ENCODE measurements at regions of chr11 and their contacts with region 1.

Region 1: DNA sequence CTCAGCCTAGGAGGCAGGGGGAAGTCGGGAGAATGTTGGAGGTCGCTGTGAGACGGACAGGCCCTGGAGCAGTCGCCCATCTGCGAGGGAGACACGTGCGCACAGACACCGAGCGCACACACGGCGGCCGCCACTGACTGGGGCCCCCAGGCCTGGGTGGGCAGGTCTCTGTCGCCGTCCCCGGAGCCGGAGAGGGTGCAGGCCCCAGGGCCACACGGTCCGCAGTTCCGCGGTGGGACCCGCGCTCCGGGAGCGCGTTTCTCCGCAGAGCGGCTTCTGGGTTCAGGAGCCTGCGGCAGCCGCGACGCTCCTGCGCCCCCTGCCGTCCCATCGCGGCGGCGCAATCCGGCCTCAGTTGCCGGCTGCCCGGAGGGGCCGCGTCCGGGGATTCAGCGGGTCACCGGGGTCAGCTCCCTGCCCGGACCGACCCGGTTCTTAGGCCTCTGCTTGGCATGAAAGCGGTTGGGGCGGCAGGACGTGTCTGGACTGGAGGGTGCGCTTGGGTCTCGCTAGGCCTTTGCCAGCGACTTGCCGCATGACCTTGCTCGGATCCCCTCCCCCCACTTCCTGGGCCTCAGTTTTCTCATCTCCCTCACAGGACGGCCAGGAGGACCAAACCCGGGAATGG is 31.2 kb downstream of the PDE2A start:
- DNase-seq: peak; percentile 19 to 92
- H3K4me3 ChIP-seq: peak overlapping the region; percentile 14 to 59 (median 30); a peak in 5 of 8 replicates
- H3K27ac ChIP-seq: no peak overlapping the region
- H3K4me1 ChIP-seq: peaks cover 0 to 2% (median 0%) of the 10 kb centered on the region in 4 experiments; a peak in 1 of 7 replicates
- H3K27me3 ChIP-seq: peaks cover 16 to 49% (median 37%) of the 10 kb centered on the region in 4 experiments
- CTCF ChIP-seq: peak; percentile 84 to 96 (median 94)
- EP300 ChIP-seq: no peak
- POLR2A ChIP-seq: no peak
- RAD21 ChIP-seq: peak; percentile 83 to 88

Region 2: GRCh38 chr11:72598906-72599305 is 44.1 kb before region 1 on chr11:
- CTCF ChIA-PET with region 1: interaction called, 624 read pairs
- POLR2A ChIA-PET with region 1: interaction called, 3 read pairs
- DNase-seq: peak in 1 of 2 experiments; percentile 70
- H3K4me3 ChIP-seq: no peak overlapping the region
- H3K27ac ChIP-seq: no peak overlapping the region
- H3K4me1 ChIP-seq: peaks cover 5 to 26% (median 20%) of the 10 kb centered on the region in 4 experiments
- H3K27me3 ChIP-seq: peaks cover 0 to 14% (median 3%) of the 10 kb centered on the region in 4 experiments; a peak in 4 of 7 replicates
- CTCF ChIP-seq: peak; percentile 82 to 86 (median 83)
- EP300 ChIP-seq: no peak
- POLR2A ChIP-seq: no peak
- RAD21 ChIP-seq: peak; percentile 68 to 78

Region 3: DNA sequence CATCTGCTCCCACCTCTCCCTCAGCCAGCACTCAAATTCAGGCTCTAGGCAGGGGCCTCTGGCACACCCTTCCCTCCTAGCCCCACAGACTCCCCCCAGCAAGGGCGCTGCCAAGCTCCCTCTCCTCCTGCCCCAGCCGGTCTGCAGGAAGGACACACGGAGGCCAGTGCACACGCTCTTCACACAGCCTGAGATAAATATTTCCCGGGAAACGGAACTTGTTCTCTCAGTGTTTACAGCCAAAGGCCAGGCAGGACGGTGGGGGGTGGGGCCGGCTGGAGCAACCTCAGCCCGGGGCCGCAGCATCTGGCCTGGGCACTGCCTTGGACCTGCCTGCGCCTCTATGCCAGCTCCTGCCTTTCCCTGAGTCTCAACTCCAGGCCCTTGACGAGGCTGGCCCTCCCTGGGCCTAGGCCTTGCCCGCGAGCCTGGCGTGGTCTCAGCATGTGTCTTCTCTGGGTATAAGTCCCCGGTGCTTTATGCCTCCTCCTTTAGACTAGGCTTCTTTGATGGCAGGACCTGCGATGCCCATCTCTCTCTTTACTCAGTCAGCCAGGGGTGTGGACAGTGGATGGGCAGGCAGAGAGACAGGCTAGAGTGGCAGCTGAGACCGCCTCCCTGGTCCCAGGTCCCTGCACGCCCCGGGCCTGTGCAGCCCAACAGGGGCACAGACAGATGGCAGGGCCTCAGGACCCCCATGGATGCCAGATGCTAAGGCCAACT is 17.1 kb before region 1 on chr11:
- CTCF ChIA-PET with region 1: interaction called, 22 read pairs
- POLR2A ChIA-PET with region 1: no interaction called
- DNase-seq: no peak
- H3K4me3 ChIP-seq: no peak overlapping the region
- H3K27ac ChIP-seq: no peak overlapping the region
- H3K4me1 ChIP-seq: peaks cover 0 to 4% (median 2%) of the 10 kb centered on the region in 4 experiments; a peak in 3 of 7 replicates
- H3K27me3 ChIP-seq: peaks cover 0 to 5% (median 0%) of the 10 kb centered on the region in 4 experiments; a peak in 1 of 7 replicates
- CTCF ChIP-seq: no peak
- EP300 ChIP-seq: no peak
- POLR2A ChIP-seq: no peak
- RAD21 ChIP-seq: no peak

Region 4: GRCh38 chr11:72631806-72632731 is 10.9 kb before region 1 on chr11:
- CTCF ChIA-PET with region 1: interaction called, 22 read pairs
- POLR2A ChIA-PET with region 1: no interaction called
- DNase-seq: no peak
- H3K4me3 ChIP-seq: no peak overlapping the region
- H3K27ac ChIP-seq: no peak overlapping the region
- H3K4me1 ChIP-seq: peaks cover 0 to 23% (median 9%) of the 10 kb centered on the region in 4 experiments; a peak in 6 of 7 replicates
- H3K27me3 ChIP-seq: no peaks in the 10 kb centered on the region
- CTCF ChIP-seq: no peak
- EP300 ChIP-seq: no peak
- POLR2A ChIP-seq: no peak
- RAD21 ChIP-seq: no peak

Region 5: DNA sequence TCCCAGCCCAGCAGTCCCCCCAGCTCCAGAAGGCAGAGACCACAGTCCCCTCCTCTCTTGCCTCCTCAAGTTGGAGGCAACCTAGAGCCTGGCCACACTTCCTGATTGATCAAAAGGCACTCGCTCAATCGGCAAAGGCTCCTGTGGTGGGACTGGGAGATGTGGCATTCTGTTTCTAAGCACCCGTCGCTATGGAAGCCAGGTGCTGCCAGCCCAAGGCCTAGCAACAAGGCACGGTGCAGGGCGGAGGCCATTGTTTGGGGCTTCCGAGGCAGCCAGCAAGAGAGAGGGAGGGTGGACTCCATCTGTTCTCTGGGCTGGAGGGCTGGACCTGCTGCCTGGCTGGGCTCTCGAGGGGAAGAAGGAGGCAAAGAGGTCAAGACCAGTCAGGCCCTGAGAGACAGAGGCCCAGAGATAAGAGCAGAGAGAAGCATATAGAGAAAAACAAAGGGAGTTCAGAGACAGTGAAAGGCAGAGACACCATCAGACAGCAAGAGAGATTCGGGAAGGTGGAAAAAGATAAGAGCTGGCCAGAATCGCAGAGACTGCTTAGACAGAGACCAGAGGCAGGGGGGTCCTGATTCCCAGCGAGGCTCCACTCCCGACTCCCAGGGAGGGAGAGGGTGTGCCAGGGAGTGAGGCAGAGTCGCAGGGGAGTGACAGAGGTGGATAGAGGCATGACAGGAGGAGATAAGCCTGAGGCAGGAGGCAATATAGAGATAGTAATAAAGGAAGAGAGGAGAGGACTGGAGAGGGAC is 10.1 kb after region 1 on chr11:
- CTCF ChIA-PET with region 1: interaction called, 15 read pairs
- POLR2A ChIA-PET with region 1: interaction called, 6 read pairs
- DNase-seq: peak; percentile 21 to 77
- H3K4me3 ChIP-seq: no peak overlapping the region
- H3K27ac ChIP-seq: no peak overlapping the region
- H3K4me1 ChIP-seq: peaks cover 0 to 12% (median 7%) of the 10 kb centered on the region in 4 experiments; a peak in 4 of 7 replicates
- H3K27me3 ChIP-seq: no peaks in the 10 kb centered on the region; a peak in 1 of 7 replicates
- CTCF ChIP-seq: no peak
- EP300 ChIP-seq: no peak
- POLR2A ChIP-seq: no peak
- RAD21 ChIP-seq: no peak

Region 6: GRCh38 chr11:72668611-72669347 is 25.8 kb after region 1 on chr11:
- CTCF ChIA-PET with region 1: interaction called, 10 read pairs
- POLR2A ChIA-PET with region 1: no interaction called
- DNase-seq: no peak
- H3K4me3 ChIP-seq: no peak overlapping the region
- H3K27ac ChIP-seq: no peak overlapping the region
- H3K4me1 ChIP-seq: peaks cover 0 to 13% (median 7%) of the 10 kb centered on the region in 4 experiments; a peak in 6 of 7 replicates
- H3K27me3 ChIP-seq: peaks cover 0 to 8% (median under 1%) of the 10 kb centered on the region in 4 experiments; a peak in 4 of 7 replicates
- CTCF ChIP-seq: no peak
- EP300 ChIP-seq: no peak
- POLR2A ChIP-seq: no peak
- RAD21 ChIP-seq: no peak

Region 7: DNA sequence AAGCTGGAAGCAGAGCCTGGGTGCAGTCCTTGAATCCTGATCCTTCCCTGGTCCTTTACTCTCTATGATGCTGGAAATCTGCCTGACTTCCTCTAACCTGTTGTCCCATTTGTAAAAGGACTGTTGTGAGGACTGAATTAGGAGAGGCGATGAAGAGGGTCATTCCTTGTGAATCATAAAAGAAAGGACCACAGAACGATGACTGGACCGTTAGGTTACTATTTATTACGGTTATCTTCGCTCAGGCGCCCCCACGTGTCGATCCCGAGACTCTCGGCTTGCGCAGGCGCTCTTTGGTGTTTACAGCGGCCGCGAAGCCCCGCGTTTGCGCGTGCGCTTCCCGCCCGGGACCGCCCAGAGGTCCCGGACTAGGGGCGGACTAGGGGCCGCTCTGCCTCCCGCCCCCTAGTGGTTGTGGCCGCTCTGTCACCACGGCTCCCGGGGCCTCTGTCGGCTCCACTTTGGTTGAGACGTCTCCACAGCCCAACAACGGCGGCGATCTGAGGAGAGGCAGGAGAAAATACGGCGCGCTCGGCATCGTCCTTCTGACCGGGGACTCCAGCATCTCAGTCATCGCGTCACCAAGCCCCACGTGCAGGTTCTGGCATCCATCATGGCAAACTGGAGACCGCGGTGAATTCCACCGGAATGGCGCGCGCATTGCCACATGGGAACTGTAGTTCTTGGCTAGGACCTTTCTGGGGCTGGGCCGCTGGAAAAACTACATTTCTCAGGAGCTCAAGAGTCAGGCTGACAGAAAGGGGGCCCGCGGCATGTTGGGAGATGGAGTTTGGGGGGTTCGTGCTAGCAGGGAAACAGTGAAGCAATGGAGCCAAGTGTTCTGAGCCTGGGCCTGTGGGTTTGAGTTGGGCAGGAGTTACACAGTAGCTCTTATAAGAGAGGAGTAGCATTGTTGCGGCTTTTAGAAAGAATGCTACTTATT is 150.7 kb after region 1 on chr11 and contains the start of gene STARD10:
- CTCF ChIA-PET with region 1: no interaction called
- POLR2A ChIA-PET with region 1: no interaction called
- DNase-seq: peak; percentile 83 to 93
- H3K4me3 ChIP-seq: peak within 1 kb of the TSS; percentile 46 to 93 (median 88)
- H3K27ac ChIP-seq: peak within 1 kb of the TSS; percentile 74; the same call in 1 of the 2 replicates
- H3K4me1 ChIP-seq: peaks cover 0 to 13% (median 7%) of the 10 kb centered on the region in 4 experiments; a peak in 4 of 7 replicates
- H3K27me3 ChIP-seq: no peaks in the 10 kb centered on the region
- CTCF ChIP-seq: peak; percentile 66 to 84 (median 76)
- EP300 ChIP-seq: no peak
- POLR2A ChIP-seq: peak in 1 of 2 experiments; percentile 60; a peak in 2 of 3 replicates
- RAD21 ChIP-seq: peak; percentile 51 to 60; a peak in 3 of 4 replicates
- total RNA-seq, gene STARD10: 23.7 and 25.3 TPM in 2 replicates

Measured in H1 (cell line).